Prostate gland (tissue), 2 donors: ENCODE measurements at regions of chr11 and their contacts with region 1.

Region 1: DNA sequence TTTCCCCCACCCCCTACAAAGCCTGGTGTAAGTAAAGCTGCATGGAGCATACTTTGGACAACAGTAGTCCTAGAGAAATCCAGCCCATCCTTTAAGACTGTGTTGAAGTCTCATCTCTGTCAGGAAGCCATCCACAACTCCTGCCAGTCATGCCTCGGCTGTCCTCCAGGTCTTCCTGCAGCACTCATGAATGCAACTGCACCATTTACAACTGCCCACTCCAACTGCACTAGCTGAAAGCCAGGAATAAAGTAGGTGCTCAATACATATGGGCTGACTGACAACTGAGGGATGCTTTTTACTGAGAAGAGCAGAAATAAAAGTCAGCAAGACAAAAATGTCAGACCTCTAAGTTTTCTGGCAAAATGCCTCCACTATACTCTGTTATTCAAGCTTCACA is 27.4 kb downstream of the IL18BP start:
- DNase-seq: no peak
- H3K4me3 ChIP-seq: no peak overlapping the region
- H3K27ac ChIP-seq: peak overlapping the region; percentile 65 to 68
- H3K4me1 ChIP-seq: peaks cover 37% of the 10 kb centered on the region
- H3K27me3 ChIP-seq: no peaks in the 10 kb centered on the region
- CTCF ChIP-seq: no peak
- POLR2A ChIP-seq: no peak

Region 2: DNA sequence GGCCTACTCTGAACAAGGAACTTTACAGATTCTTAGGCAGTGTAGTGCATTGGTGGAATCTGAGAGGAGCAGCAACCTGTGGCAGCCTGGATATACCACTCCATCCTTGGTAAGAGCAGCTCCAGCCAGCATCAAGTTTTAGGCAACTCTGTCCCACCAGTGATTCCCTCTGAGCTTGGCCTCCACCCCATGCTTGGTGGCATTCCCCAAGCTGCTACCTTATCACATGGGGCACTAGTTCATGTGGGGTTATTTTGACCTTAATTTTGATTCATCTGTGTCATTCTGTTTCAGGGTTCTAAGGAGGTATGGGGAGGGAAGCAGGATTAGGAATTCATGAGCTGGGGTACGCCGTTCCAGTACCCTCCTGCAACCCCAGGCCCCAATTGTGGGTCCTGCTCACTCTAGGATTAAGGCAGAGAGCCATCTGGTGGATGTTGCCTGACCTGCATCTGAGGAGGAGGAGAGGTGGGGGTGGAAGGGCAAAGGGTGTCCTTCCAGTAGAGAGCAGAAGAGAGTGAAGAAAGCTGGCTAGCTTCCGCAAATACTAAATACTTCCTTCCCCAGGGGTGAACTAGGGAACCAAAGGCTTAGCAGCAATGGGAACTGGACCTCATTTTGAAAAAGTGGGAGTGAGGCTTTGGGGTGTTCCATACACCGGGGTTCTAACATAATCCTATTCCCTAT is 65.1 kb after region 1 on chr11:
- intact Hi-C with region 1: loop called (anchors 2 kb)
- DNase-seq: peak; percentile 71
- H3K4me3 ChIP-seq: no peak overlapping the region
- H3K27ac ChIP-seq: peak overlapping the region; percentile 55 to 58
- H3K4me1 ChIP-seq: peaks cover 4% of the 10 kb centered on the region
- H3K27me3 ChIP-seq: no peaks in the 10 kb centered on the region
- CTCF ChIP-seq: peak; percentile 64 to 97 (median 91)
- POLR2A ChIP-seq: no peak

Region 3: GRCh38 chr11:72102946-72103753 is 77.1 kb after region 1 on chr11 and contains the start of gene LAMTOR1:
- intact Hi-C with region 1: no loop called
- DNase-seq: peak; percentile 99
- H3K4me3 ChIP-seq: peak within 1 kb of the TSS; percentile 80 to 84
- H3K27ac ChIP-seq: peak within 1 kb of the TSS; percentile 91 to 94
- H3K4me1 ChIP-seq: peaks cover 10% of the 10 kb centered on the region
- H3K27me3 ChIP-seq: no peaks in the 10 kb centered on the region
- CTCF ChIP-seq: peak in 3 of 4 experiments; percentile 20 to 62 (median 62)
- POLR2A ChIP-seq: peak; percentile 44
- total RNA-seq, gene LAMTOR1: 128 to 230 TPM

Region 4: DNA sequence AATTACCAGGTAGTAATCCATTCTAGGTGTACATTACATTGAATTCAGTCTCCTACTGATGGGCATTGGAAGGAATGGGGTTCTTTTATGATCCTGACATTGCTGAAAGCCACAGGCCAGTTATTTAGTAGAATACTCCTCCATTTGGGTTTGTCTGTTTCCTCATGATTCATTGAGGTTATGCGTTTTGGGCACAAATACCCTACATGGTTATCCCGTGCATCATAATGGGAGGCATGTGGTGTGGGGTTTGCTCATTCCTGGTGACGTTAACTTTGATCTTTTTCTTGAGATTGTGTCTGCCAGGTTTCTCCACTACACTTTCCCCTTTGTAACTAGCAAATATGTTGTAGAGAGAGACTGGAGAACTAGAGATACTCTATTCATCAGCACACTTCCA is 115.0 kb after region 1 on chr11:
- intact Hi-C with region 1: loop called (anchors 5 kb)
- DNase-seq: no peak
- H3K4me3 ChIP-seq: no peak overlapping the region
- H3K27ac ChIP-seq: no peak overlapping the region
- H3K4me1 ChIP-seq: no peaks in the 10 kb centered on the region
- H3K27me3 ChIP-seq: no peaks in the 10 kb centered on the region
- CTCF ChIP-seq: no peak
- POLR2A ChIP-seq: no peak